ENCODE measurements at regions of chr19 and their contacts with region 1.

Region 1: GRCh38 chr19:17075035-17075863 is at the starts of genes HAUS8 and MYO9B:
- DNase-seq: peak; percentile 98
- ATAC-seq: peak; percentile 87
- H3K4me3 Mint-ChIP-seq: peak within 1 kb of the TSS; percentile 99
- H3K27ac Mint-ChIP-seq: peak within 1 kb of the TSS; percentile 97
- H3K4me1 Mint-ChIP-seq: peaks cover 75% of the 10 kb centered on the region
- H3K27me3 Mint-ChIP-seq: no peaks in the 10 kb centered on the region
- CTCF ChIP-seq: no peak
- total RNA-seq, gene HAUS8: 15.8 and 17.8 TPM in 2 replicates
- total RNA-seq, gene MYO9B: 217 and 239 TPM in 2 replicates

Region 2: DNA sequence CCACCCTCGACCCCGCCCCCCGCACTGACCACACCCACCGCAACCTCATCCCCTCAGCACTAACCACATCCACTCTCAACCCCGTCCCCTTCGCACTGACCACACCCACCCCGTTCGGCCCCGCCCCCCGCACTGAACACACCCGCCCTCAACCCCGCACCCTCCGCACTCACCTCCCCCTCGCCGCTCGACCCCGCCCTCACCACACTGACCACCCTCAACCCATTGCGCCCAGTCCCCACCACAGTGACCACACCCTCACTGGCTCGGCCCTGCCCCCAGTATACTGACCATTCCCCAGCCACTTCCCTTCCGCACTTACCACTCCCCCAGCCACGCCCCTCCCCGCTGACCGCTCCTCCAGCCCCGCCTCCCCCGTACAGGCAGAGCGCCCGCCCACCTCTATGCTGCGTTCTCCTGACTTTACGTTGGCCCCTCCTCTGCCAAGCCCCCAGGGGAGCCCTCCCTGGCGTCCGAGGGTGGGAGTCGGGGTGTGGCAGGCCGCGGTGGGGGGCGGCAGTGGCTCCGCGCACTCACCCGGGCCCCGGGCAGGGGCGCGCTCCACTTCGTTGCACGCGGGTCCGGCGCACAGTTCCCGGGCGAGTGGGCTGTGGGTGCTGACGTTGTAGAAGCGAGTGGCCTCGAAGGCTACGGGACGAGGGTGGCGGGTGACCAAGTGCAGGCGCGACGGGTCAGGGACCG is 177.9 kb before region 1 on chr19:
- CTCF ChIA-PET with region 1: no interaction called
- POLR2A ChIA-PET with region 1: no interaction called
- intact Hi-C with region 1: loop called (anchors 1 kb)
- DNase-seq: peak; percentile 67
- ATAC-seq: peak; percentile 74
- H3K4me3 Mint-ChIP-seq: peak overlapping the region; percentile 81
- H3K27ac Mint-ChIP-seq: peak overlapping the region; percentile 24
- H3K4me1 Mint-ChIP-seq: peaks cover 46% of the 10 kb centered on the region
- H3K27me3 Mint-ChIP-seq: no peaks in the 10 kb centered on the region
- CTCF ChIP-seq: no peak

Region 3: GRCh38 chr19:17125715-17126677 is 50.7 kb after region 1 on chr19:
- CTCF ChIA-PET with region 1: interaction called, 5 read pairs
- POLR2A ChIA-PET with region 1: interaction called, 15 read pairs
- intact Hi-C with region 1: loop called (anchors 1 kb)
- DNase-seq: peak; percentile 51
- ATAC-seq: peak; percentile 77
- H3K4me3 Mint-ChIP-seq: peak overlapping the region; percentile 84
- H3K27ac Mint-ChIP-seq: peak overlapping the region; percentile 98
- H3K4me1 Mint-ChIP-seq: peaks cover 66% of the 10 kb centered on the region
- H3K27me3 Mint-ChIP-seq: no peaks in the 10 kb centered on the region
- CTCF ChIP-seq: no peak

Region 4: GRCh38 chr19:17156927-17157302 is 81.7 kb after region 1 on chr19:
- CTCF ChIA-PET with region 1: no interaction called
- POLR2A ChIA-PET with region 1: no interaction called
- intact Hi-C with region 1: no loop called
- DNase-seq: no peak
- ATAC-seq: peak; percentile 62
- H3K4me3 Mint-ChIP-seq: no peak overlapping the region
- H3K27ac Mint-ChIP-seq: peak overlapping the region; percentile 41
- H3K4me1 Mint-ChIP-seq: no peaks in the 10 kb centered on the region
- H3K27me3 Mint-ChIP-seq: no peaks in the 10 kb centered on the region
- CTCF ChIP-seq: no peak

Region 5: DNA sequence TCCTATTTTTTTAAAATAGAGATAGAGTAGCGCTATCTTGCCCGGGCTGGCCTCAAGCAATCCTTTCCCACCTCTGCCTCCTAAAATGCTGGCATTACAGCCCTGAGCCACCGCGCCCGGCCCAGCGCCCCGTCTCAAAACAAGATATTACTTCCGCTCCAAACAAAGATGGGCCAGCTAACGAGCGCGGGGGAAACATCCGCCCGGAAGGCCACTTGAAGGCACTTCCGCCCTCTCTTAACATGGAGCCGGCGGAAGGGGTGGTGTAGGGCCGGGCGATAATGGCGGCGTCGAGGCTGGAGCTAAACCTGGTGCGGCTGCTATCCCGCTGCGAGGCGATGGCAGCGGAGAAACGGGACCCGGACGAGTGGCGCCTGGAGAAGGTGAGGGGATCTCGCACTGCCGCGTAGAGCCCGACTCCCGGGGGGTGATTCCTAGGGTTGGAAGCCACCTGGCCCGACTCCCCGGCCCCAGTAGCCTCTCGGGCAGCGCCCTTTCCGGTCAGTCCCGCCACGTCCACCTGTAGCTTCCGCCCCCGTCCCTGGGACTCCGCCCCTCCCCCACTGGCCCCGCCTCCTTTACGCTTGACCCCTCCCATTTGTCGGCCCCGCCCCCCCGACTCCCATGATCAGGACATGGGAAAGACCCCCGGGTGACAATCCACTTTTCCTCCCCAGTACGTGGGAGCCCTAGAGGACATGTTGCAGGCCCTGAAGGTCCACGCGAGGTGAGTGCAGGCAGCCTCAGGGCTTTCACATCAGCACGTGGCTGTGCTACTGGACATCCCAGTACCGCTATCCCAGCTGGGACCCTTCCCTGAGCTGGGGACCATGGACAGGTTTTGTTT is 140.1 kb after region 1 on chr19 and contains the start of gene USE1:
- CTCF ChIA-PET with region 1: no interaction called
- POLR2A ChIA-PET with region 1: interaction called, 17 read pairs
- intact Hi-C with region 1: no loop called
- DNase-seq: peak; percentile 73
- ATAC-seq: peak; percentile 92
- H3K4me3 Mint-ChIP-seq: peak within 1 kb of the TSS; percentile 91
- H3K27ac Mint-ChIP-seq: peak within 1 kb of the TSS; percentile 96
- H3K4me1 Mint-ChIP-seq: peaks cover 19% of the 10 kb centered on the region
- H3K27me3 Mint-ChIP-seq: no peaks in the 10 kb centered on the region
- CTCF ChIP-seq: no peak
- total RNA-seq, gene USE1: 41.9 and 43.4 TPM in 2 replicates

Region 6: GRCh38 chr19:17266975-17267788 is 191.9 kb after region 1 on chr19 and contains the start of gene BABAM1:
- CTCF ChIA-PET with region 1: interaction called, 3 read pairs
- POLR2A ChIA-PET with region 1: interaction called, 3 read pairs
- intact Hi-C with region 1: loop called (anchors 1 kb)
- DNase-seq: peak; percentile 81
- ATAC-seq: peak; percentile 89
- H3K4me3 Mint-ChIP-seq: peak within 1 kb of the TSS; percentile 91
- H3K27ac Mint-ChIP-seq: peak within 1 kb of the TSS; percentile 93
- H3K4me1 Mint-ChIP-seq: peaks cover 29% of the 10 kb centered on the region
- H3K27me3 Mint-ChIP-seq: no peaks in the 10 kb centered on the region
- CTCF ChIP-seq: no peak
- total RNA-seq, gene BABAM1: 121 and 135 TPM in 2 replicates

Region 7: GRCh38 chr19:17470068-17470841 is 395.0 kb after region 1 on chr19 and contains the start of gene SLC27A1:
- CTCF ChIA-PET with region 1: no interaction called
- POLR2A ChIA-PET with region 1: no interaction called
- intact Hi-C with region 1: loop called (anchors 1 kb)
- DNase-seq: peak; percentile 85
- ATAC-seq: peak; percentile 81
- H3K4me3 Mint-ChIP-seq: peak within 1 kb of the TSS; percentile 91
- H3K27ac Mint-ChIP-seq: peak within 1 kb of the TSS; percentile 84
- H3K4me1 Mint-ChIP-seq: peaks cover 23% of the 10 kb centered on the region
- H3K27me3 Mint-ChIP-seq: no peaks in the 10 kb centered on the region
- CTCF ChIP-seq: no peak
- total RNA-seq, gene SLC27A1: 4.3 and 4.6 TPM in 2 replicates